ENCODE measurements at regions of chr5 and their contacts with region 1.

Region 1: DNA sequence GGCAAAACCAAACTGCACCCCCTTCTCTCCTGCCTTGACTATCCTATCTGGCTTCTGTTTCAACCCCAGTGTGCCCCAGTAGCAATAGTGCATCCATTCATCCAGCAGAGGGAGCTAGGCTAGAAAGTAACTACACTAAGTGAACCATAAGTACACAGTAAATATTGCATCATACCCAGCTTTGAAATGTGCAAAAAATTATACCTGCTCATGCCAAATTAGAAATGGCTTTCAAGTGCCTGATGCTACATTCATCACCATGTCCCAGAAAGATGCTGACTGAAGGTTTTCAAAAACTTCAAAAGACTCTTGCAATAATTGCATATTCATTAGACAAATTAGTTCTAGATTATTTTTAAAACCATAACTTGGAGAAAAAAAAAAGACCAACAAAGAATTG is 153.5 kb downstream of the PRELID2 start:
- DNase-seq: peak; percentile 72
- H3K4me3 Mint-ChIP-seq: no peak overlapping the region
- H3K27ac Mint-ChIP-seq: no peak overlapping the region
- H3K4me1 Mint-ChIP-seq: peaks cover 20% of the 10 kb centered on the region
- H3K27me3 Mint-ChIP-seq: no peaks in the 10 kb centered on the region
- CTCF ChIP-seq: peak; percentile 73

Region 2: GRCh38 chr5:145362261-145362660 is 319.4 kb before region 1 on chr5:
- CTCF ChIA-PET with region 1: interaction called, 3 read pairs
- intact Hi-C with region 1: loop called (anchors 5 kb)
- DNase-seq: peak; percentile 11
- H3K4me3 Mint-ChIP-seq: no peak overlapping the region
- H3K27ac Mint-ChIP-seq: peak overlapping the region; percentile 69
- H3K4me1 Mint-ChIP-seq: peaks cover 17% of the 10 kb centered on the region
- H3K27me3 Mint-ChIP-seq: no peaks in the 10 kb centered on the region
- CTCF ChIP-seq: no peak

Region 3: DNA sequence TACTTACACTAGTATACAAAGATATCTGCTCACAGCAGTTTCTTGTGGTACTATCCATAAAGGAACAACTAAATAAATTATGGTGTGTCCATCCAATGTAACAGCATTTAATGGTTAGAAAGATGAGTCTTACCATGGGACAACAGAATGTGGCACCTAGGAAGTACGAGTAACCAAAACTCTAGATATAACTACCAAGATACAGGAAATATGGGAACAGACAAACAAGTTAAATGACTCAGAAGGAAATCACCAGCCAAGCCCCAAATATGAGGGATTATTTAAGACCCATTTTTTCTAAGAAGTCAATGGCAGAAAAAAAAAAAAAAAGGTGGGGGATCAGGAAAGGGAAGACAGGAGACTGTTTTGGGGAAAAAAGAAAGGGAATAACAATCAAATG is 141.3 kb before region 1 on chr5:
- CTCF ChIA-PET with region 1: no interaction called
- intact Hi-C with region 1: loop called (anchors 5 kb)
- DNase-seq: no peak
- H3K4me3 Mint-ChIP-seq: no peak overlapping the region
- H3K27ac Mint-ChIP-seq: peak overlapping the region; percentile 22
- H3K4me1 Mint-ChIP-seq: peaks cover 56% of the 10 kb centered on the region
- H3K27me3 Mint-ChIP-seq: no peaks in the 10 kb centered on the region
- CTCF ChIP-seq: no peak

Region 4: GRCh38 chr5:145775893-145776444 is 94.3 kb after region 1 on chr5:
- CTCF ChIA-PET with region 1: no interaction called
- intact Hi-C with region 1: no loop called
- DNase-seq: peak; percentile 24
- H3K4me3 Mint-ChIP-seq: no peak overlapping the region
- H3K27ac Mint-ChIP-seq: peak overlapping the region; percentile 12
- H3K4me1 Mint-ChIP-seq: peaks cover 9% of the 10 kb centered on the region
- H3K27me3 Mint-ChIP-seq: no peaks in the 10 kb centered on the region
- CTCF ChIP-seq: no peak

Region 5: GRCh38 chr5:145887976-145888574 is 206.4 kb after region 1 on chr5:
- CTCF ChIA-PET with region 1: interaction called, 7 read pairs
- intact Hi-C with region 1: loop called (anchors 5 kb)
- DNase-seq: peak; percentile 72
- H3K4me3 Mint-ChIP-seq: no peak overlapping the region
- H3K27ac Mint-ChIP-seq: no peak overlapping the region
- H3K4me1 Mint-ChIP-seq: no peaks in the 10 kb centered on the region
- H3K27me3 Mint-ChIP-seq: no peaks in the 10 kb centered on the region
- CTCF ChIP-seq: peak; percentile 74

Measured in Calu3 (cell line).